Esophagus muscularis mucosa (tissue), 4 donors: ENCODE measurements at regions of chr14 and their contacts with region 1.

Region 1: DNA sequence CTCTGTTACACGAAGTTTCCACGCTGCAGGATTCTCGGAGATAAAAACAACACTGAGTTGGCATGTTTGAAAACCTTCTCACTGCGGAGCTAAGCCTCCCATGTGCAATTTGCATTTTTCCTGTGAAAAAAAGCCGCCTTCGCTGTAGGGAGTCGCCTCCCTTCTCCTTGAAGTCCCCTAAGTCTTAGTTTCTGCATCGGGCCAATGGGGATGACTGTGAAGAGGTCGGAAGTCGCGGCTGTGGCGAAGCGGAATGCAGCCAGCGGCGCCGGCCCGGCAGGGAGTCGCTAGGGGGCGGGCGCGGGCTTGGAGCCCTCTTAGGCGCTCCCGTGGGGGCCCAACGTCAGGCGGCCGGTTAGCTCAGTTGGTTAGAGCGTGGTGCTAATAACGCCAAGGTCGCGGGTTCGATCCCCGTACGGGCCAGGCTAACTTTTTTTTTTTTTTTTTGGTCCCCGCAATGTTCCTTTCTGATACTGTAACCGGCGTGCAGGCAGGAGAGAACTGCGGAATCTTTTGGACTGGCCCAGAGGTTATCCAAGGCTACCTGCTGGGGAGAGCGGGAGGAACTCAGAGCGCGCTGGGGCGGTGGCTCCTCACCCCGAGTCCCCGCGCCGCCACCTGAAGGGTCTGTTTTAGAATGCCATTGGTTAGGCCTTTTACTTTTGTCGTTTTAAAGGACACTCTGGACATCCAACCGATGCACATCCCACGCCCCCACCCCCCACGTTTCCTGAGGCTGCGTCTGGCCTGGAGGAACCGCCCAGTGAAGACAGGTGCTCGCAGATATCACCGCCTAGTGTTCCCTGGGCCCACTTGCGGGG is 2.6 kb upstream of the ZNF839 start:
- DNase-seq: peak; percentile 99
- H3K4me3 ChIP-seq: peak overlapping the region; percentile 50 to 62 (median 56)
- H3K27ac ChIP-seq: peak overlapping the region; percentile 96 to 98 (median 97)
- H3K4me1 ChIP-seq: peaks cover 40 to 72% (median 60%) of the 10 kb centered on the region in 4 donors
- H3K27me3 ChIP-seq: no peaks in the 10 kb centered on the region
- CTCF ChIP-seq: peak; percentile 73 to 89 (median 80)
- EP300 ChIP-seq: no peak
- POLR2A ChIP-seq: no peak

Region 2: GRCh38 chr14:101964297-101965144 is 352.4 kb before region 1 on chr14 and contains the start of gene DYNC1H1:
- intact Hi-C with region 1: loop called (anchors 5 kb)
- DNase-seq: peak; percentile 98
- H3K4me3 ChIP-seq: peak within 1 kb of the TSS; percentile 97 to 100 (median 100)
- H3K27ac ChIP-seq: peak within 1 kb of the TSS; percentile 98 to 99 (median 99)
- H3K4me1 ChIP-seq: peaks cover 39 to 78% (median 70%) of the 10 kb centered on the region in 4 donors
- H3K27me3 ChIP-seq: no peaks in the 10 kb centered on the region
- CTCF ChIP-seq: no peak
- EP300 ChIP-seq: no peak
- POLR2A ChIP-seq: peak; percentile 97
- total RNA-seq, gene DYNC1H1: 608 to 897 (median 728) TPM

Region 3: DNA sequence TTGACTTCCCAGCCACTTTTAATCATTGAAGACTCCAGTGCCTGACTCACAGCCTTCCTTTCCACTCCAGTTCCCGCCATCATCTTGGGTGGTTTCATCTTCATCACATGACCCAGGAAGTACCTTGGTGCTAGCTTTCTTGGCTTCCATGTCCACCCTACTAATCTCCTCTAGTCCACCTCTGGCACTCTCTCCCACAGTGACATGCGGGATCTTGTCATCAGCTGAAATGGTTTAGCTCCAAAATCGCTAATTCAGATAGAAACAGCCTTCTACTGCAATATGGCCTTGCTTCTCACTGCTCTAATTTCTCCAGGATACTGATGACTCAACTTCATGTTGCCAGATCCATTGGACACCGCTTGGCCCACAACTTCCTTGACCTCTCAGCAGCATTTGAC is 152.7 kb before region 1 on chr14:
- intact Hi-C with region 1: no loop called
- DNase-seq: no peak
- H3K4me3 ChIP-seq: no peak overlapping the region
- H3K27ac ChIP-seq: no peak overlapping the region
- H3K4me1 ChIP-seq: peaks cover 6 to 16% (median 10%) of the 10 kb centered on the region in 4 donors
- H3K27me3 ChIP-seq: no peaks in the 10 kb centered on the region
- CTCF ChIP-seq: no peak
- EP300 ChIP-seq: no peak
- POLR2A ChIP-seq: no peak

Region 4: DNA sequence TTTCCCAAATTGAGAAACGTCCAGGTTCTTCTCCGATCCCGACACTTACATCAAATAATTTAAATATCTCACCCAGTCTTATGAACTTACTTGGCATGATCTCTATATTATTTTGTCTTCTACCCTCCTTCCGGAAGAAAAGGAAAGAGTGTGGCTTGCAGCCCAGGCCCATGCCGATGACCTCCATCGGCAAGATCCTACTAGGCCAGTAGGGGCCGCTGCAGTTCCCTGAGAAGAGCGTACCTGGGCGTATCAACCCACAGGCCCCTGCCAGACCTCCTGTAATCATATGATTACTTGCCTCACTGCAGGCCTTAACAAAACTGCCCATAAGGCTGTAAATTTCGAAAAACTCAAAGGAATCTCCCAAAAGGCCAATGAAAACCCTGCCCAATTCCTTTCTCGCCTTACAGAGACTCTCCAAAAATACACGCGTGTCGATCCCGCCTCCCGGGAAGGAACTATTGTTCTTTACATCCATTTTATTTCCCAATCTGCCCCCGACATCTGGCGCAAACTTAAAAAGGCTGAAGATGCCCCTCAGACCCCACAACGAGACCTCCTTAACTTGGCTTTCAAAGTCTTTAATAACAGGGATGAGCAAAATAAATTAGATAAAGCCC is 81.6 kb before region 1 on chr14:
- intact Hi-C with region 1: loop called (anchors 2 kb)
- DNase-seq: no peak
- H3K4me3 ChIP-seq: peak overlapping the region; percentile 27 to 41 (median 30)
- H3K27ac ChIP-seq: peak overlapping the region in 2 of 4 donors; percentile 33 to 39
- H3K4me1 ChIP-seq: peaks cover 8 to 16% (median 10%) of the 10 kb centered on the region in 4 donors
- H3K27me3 ChIP-seq: no peaks in the 10 kb centered on the region
- CTCF ChIP-seq: peak; percentile 81 to 89 (median 87)
- EP300 ChIP-seq: no peak
- POLR2A ChIP-seq: no peak

Region 5: GRCh38 chr14:102568114-102568621 is 251.2 kb after region 1 on chr14:
- intact Hi-C with region 1: no loop called
- DNase-seq: no peak
- H3K4me3 ChIP-seq: no peak overlapping the region
- H3K27ac ChIP-seq: no peak overlapping the region
- H3K4me1 ChIP-seq: no peaks in the 10 kb centered on the region
- H3K27me3 ChIP-seq: no peaks in the 10 kb centered on the region
- CTCF ChIP-seq: no peak
- EP300 ChIP-seq: no peak
- POLR2A ChIP-seq: no peak